Right cardiac atrium (tissue), 5 donors: ENCODE measurements at regions of chr4 and their contacts with region 1.

Region 1: DNA sequence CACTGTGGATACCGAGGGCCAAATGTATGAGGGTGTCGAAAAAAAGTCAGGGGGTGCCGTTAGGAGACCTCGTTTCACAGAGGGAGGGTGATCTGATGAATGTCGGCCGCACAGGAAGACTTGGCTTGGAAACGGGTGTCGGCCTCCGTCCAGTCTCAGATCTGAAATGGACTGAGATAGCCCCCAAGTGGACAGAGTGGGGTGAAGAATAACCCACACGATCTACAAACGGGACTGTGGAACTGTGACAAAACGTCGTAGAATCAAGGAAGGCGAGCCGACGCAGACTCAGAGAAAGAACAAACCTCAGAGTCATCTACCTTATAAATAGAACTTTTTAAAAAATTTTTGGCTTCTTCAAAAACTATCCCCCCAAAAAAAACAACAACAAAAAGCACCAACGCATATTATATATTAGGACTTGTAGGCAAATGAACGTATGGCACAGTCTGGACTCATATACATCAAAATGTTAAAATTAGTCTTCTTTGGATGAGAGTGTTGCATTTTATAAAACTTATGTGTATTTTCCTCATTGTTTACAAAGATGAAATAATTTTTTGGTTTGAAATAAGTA is 63.8 kb upstream of the IRF2 start:
- DNase-seq: peak; percentile 91 to 97 (median 94)
- ATAC-seq: peak; percentile 94 to 95
- H3K4me3 ChIP-seq: peak overlapping the region; percentile 82
- H3K27ac ChIP-seq: peak overlapping the region; percentile 66
- H3K4me1 ChIP-seq: no peaks in the 10 kb centered on the region
- H3K27me3 ChIP-seq: no peaks in the 10 kb centered on the region

Region 2: DNA sequence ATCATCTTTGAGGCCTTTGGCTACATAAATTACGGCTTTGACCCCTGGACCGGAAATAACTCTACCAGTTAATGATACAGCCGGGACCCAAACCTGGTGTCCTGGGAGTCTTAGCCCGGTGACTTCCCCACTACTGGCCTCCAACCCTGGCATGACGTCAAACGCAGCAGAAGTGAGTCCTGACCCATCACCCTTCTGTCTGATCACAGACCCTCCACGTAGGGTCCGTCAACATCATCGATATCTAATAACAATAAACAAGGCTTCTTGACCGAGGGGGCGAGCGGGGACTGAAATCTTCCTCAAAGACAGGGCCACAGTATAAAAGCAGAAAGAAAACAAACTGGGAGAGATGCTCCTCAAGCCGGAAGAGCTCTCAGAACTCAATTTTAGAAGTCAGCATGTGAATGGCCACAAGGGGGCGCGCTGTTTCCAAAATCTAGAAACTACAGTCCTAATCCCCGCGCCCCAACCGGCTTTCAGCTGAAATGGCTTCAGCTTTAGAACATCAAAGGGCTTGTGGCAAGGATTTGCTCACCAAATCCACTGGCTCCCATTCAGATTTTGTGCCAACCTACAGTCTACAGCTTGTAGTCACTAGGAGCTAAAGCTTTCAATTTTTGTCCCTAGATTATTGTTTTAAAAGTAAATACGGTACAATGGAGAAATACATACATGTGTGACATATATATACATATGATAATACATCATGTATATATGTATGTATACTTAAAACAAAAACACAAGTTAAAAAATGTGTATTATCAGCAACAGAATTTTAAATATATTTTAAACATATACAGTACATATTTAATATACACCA is 274.0 kb before region 1 on chr4:
- intact Hi-C with region 1: loop called in 3 of 4 experiments (anchors 2 to 10 kb)
- DNase-seq: peak; percentile 94 to 97 (median 94)
- ATAC-seq: peak; percentile 82 to 84
- H3K4me3 ChIP-seq: peak overlapping the region; percentile 20
- H3K27ac ChIP-seq: no peak overlapping the region
- H3K4me1 ChIP-seq: peaks cover 3% of the 10 kb centered on the region
- H3K27me3 ChIP-seq: no peaks in the 10 kb centered on the region

Region 3: GRCh38 chr4:184282251-184282713 is 255.8 kb before region 1 on chr4:
- intact Hi-C with region 1: loop called in 2 of 4 experiments (anchors 5 to 10 kb)
- DNase-seq: no peak
- ATAC-seq: peak; percentile 61 to 68
- H3K4me3 ChIP-seq: no peak overlapping the region
- H3K27ac ChIP-seq: no peak overlapping the region
- H3K4me1 ChIP-seq: peaks cover 2% of the 10 kb centered on the region
- H3K27me3 ChIP-seq: no peaks in the 10 kb centered on the region

Region 4: DNA sequence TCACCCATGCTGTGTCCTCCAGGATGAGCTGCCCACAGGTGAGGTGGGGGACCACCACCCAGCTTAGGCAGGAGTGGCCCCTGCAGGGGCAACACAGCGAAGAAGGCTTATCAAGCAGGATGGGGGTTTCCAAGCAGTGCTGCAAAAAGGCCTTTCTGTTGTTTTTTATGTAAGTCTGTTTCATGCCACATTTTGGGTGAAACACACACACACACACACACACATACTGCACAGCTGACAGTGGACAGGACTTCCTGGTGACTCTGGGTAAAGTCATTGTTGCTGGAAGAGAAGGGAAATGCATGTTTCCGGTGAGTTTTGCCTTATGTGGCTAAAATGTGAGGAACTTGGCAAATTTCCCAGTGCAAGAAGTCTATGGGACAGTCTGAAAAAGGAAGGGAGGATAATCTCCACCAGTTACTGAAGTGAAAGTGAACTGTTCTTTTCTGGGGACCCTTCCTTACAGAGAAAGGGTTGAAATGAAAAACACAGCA is 183.0 kb before region 1 on chr4:
- intact Hi-C with region 1: no loop called
- DNase-seq: peak in 2 of 3 donors; percentile 73 to 78
- ATAC-seq: peak; percentile 85 to 93
- H3K4me3 ChIP-seq: no peak overlapping the region
- H3K27ac ChIP-seq: peak overlapping the region; percentile 71
- H3K4me1 ChIP-seq: peaks cover 8% of the 10 kb centered on the region
- H3K27me3 ChIP-seq: no peaks in the 10 kb centered on the region

Region 5: DNA sequence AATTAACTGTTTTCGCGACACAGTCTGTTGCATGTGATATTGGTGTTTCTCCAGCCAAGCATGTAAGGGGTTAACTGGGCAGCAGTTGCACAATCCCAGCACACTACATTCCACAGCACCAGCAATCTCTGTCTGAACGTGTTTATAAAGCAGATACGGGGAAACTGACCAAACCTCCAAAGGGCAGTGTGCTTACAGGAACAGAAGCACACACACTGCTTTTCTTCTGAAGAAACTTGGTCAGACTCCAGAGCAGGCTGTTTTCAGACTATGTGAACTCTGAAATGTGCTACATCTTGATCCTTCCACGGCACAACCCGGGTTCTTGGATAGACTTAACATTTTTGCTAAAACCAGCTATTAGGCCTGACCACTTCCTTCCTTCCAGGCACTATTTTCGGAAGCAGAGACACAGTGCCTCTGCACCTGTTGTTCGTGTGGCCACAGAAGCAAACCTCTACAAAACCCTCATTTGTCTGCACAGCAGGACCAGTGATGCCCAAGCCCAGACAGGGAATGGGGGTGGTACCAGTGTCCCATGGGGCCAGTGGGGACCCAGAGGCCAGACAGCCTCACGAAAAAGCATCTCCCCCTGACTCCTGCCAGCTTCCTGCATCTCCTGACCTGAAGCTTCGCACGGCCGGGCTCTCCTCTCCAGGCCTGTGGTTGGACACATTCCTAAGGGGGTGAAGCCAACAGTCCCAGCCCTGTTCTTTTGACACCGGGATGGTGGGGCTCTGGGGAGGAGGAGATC is 153.9 kb before region 1 on chr4:
- intact Hi-C with region 1: loop called in 2 of 4 experiments (anchors 5 to 10 kb)
- DNase-seq: peak in 2 of 3 donors; percentile 46 to 70
- ATAC-seq: peak; percentile 83 to 84
- H3K4me3 ChIP-seq: peak overlapping the region; percentile 30
- H3K27ac ChIP-seq: peak overlapping the region; percentile 54
- H3K4me1 ChIP-seq: peaks cover 37% of the 10 kb centered on the region
- H3K27me3 ChIP-seq: no peaks in the 10 kb centered on the region